MCF 10A (cell line): ENCODE measurements at regions of chr13 and their contacts with region 1.

Region 1: GRCh38 chr13:52411629-52412028 is 5.7 kb upstream of the THSD1 start:
- DNase-seq: peak; percentile 89
- H3K4me3 Mint-ChIP-seq: no peak overlapping the region
- H3K27ac Mint-ChIP-seq: peak overlapping the region; percentile 88
- H3K4me1 Mint-ChIP-seq: peaks cover 33% of the 10 kb centered on the region
- H3K27me3 Mint-ChIP-seq: no peaks in the 10 kb centered on the region
- CTCF ChIP-seq: no peak

Region 2: GRCh38 chr13:52344108-52344507 is 67.5 kb before region 1 on chr13:
- CTCF ChIA-PET with region 1: interaction called, 12 read pairs
- POLR2A ChIA-PET with region 1: interaction called, 73 read pairs
- intact Hi-C with region 1: no loop called
- DNase-seq: peak; percentile 1
- H3K4me3 Mint-ChIP-seq: no peak overlapping the region
- H3K27ac Mint-ChIP-seq: peak overlapping the region; percentile 33
- H3K4me1 Mint-ChIP-seq: peaks cover 39% of the 10 kb centered on the region
- H3K27me3 Mint-ChIP-seq: no peaks in the 10 kb centered on the region
- CTCF ChIP-seq: no peak

Region 3: GRCh38 chr13:52348983-52349780 is 62.4 kb before region 1 on chr13:
- CTCF ChIA-PET with region 1: interaction called, 12 read pairs
- POLR2A ChIA-PET with region 1: interaction called, 73 read pairs
- intact Hi-C with region 1: no loop called
- DNase-seq: peak; percentile 83
- H3K4me3 Mint-ChIP-seq: no peak overlapping the region
- H3K27ac Mint-ChIP-seq: peak overlapping the region; percentile 66
- H3K4me1 Mint-ChIP-seq: peaks cover 46% of the 10 kb centered on the region
- H3K27me3 Mint-ChIP-seq: no peaks in the 10 kb centered on the region
- CTCF ChIP-seq: no peak

Region 4: GRCh38 chr13:52428295-52428694 is 16.7 kb after region 1 on chr13:
- CTCF ChIA-PET with region 1: interaction called, 7 read pairs
- POLR2A ChIA-PET with region 1: interaction called, 13 read pairs
- intact Hi-C with region 1: no loop called
- DNase-seq: no peak
- H3K4me3 Mint-ChIP-seq: no peak overlapping the region
- H3K27ac Mint-ChIP-seq: no peak overlapping the region
- H3K4me1 Mint-ChIP-seq: no peaks in the 10 kb centered on the region
- H3K27me3 Mint-ChIP-seq: no peaks in the 10 kb centered on the region
- CTCF ChIP-seq: no peak

Region 5: DNA sequence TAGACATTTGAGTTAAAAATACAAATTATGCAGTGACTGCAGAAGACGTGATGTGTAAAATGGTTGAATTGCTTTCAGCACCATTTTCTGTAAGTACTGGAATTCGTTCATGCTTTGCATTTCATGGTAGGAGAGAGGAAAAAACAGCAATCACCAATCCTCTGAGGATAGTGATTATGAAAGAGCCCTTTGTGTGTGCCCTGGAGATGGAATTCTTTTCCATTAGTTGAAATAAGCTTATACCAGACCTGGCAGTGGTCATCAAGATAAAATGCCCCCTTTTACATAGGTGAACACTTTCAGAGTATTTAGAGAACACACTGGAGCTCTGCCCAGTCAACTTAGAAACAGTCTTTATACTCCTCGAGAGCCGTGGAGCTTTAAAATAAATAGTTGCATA is 326.3 kb after region 1 on chr13:
- CTCF ChIA-PET with region 1: no interaction called
- POLR2A ChIA-PET with region 1: no interaction called
- intact Hi-C with region 1: no loop called
- DNase-seq: no peak
- H3K4me3 Mint-ChIP-seq: no peak overlapping the region
- H3K27ac Mint-ChIP-seq: no peak overlapping the region
- H3K4me1 Mint-ChIP-seq: no peaks in the 10 kb centered on the region
- H3K27me3 Mint-ChIP-seq: peaks cover 34% of the 10 kb centered on the region
- CTCF ChIP-seq: no peak

Region 6: DNA sequence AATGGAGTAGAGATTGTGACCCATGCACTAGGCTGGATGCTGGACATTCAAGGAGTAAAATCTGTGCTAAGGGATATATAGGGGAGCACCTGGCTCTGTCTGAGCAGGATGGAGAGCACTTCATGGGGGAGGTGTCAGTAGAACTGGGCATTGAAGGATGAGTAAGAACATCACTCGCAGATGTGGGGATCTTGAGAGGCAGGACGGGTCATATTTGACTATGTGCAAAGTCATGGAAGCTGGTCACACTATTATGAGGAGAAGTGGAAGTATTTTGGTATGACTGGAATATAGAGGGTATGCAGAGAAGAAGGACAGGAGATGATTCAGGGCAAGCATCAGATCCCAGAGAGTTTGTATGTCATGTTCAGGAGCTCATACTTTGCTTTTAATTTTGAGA is 499.7 kb after region 1 on chr13:
- CTCF ChIA-PET with region 1: no interaction called
- POLR2A ChIA-PET with region 1: no interaction called
- intact Hi-C with region 1: no loop called
- DNase-seq: no peak
- H3K4me3 Mint-ChIP-seq: no peak overlapping the region
- H3K27ac Mint-ChIP-seq: no peak overlapping the region
- H3K4me1 Mint-ChIP-seq: no peaks in the 10 kb centered on the region
- H3K27me3 Mint-ChIP-seq: peaks cover 46% of the 10 kb centered on the region
- CTCF ChIP-seq: no peak